ENCODE measurements at regions of chr15 and their contacts with region 1.

Region 1: GRCh38 chr15:38683382-38684242 is 119.0 kb upstream of the RASGRP1 start:
- DNase-seq: no peak
- ATAC-seq: peak; percentile 94
- H3K4me3 ChIP-seq: no peak overlapping the region
- H3K27ac ChIP-seq: no peak overlapping the region
- H3K4me1 ChIP-seq: peaks cover 5% of the 10 kb centered on the region
- H3K27me3 ChIP-seq: no peaks in the 10 kb centered on the region
- CTCF ChIP-seq: peak; percentile 73 to 91 (median 88)
- EP300 ChIP-seq: no peak
- POLR2A ChIP-seq: no peak
- RAD21 ChIP-seq: peak; percentile 99

Region 2: GRCh38 chr15:38474155-38474757 is 209.4 kb before region 1 on chr15:
- CTCF ChIA-PET with region 1: interaction called, 219 read pairs
- POLR2A ChIA-PET with region 1: no interaction called
- RAD21 ChIA-PET with region 1: interaction called, 148 read pairs
- SMC1A ChIA-PET with region 1: interaction called, 115 read pairs
- in situ Hi-C with region 1: no loop called
- intact Hi-C with region 1: loop called (anchors 1 kb)
- DNase-seq: peak; percentile 33
- ATAC-seq: peak; percentile 99
- H3K4me3 ChIP-seq: no peak overlapping the region
- H3K27ac ChIP-seq: no peak overlapping the region
- H3K4me1 ChIP-seq: no peaks in the 10 kb centered on the region
- H3K27me3 ChIP-seq: no peaks in the 10 kb centered on the region
- CTCF ChIP-seq: peak; percentile 67 to 92 (median 74); a peak in 5 of 6 replicates
- EP300 ChIP-seq: no peak
- POLR2A ChIP-seq: no peak
- RAD21 ChIP-seq: peak; percentile 84

Region 3: GRCh38 chr15:38521316-38521715 is 162.3 kb before region 1 on chr15:
- CTCF ChIA-PET with region 1: interaction called, 41 read pairs
- POLR2A ChIA-PET with region 1: interaction called, 8 read pairs
- RAD21 ChIA-PET with region 1: interaction called, 15 read pairs
- SMC1A ChIA-PET with region 1: interaction called, 208 read pairs
- in situ Hi-C with region 1: no loop called
- intact Hi-C with region 1: no loop called
- DNase-seq: no peak
- ATAC-seq: no peak
- H3K4me3 ChIP-seq: no peak overlapping the region
- H3K27ac ChIP-seq: no peak overlapping the region
- H3K4me1 ChIP-seq: no peaks in the 10 kb centered on the region
- H3K27me3 ChIP-seq: no peaks in the 10 kb centered on the region
- CTCF ChIP-seq: no peak
- EP300 ChIP-seq: no peak
- POLR2A ChIP-seq: no peak
- RAD21 ChIP-seq: no peak

Region 4: GRCh38 chr15:38563723-38564519 is 119.7 kb before region 1 on chr15:
- CTCF ChIA-PET with region 1: interaction called, 276 read pairs
- POLR2A ChIA-PET with region 1: interaction called, 18 read pairs
- RAD21 ChIA-PET with region 1: interaction called, 248 read pairs
- SMC1A ChIA-PET with region 1: interaction called, 293 read pairs
- in situ Hi-C with region 1: loop called (anchors 5 kb)
- intact Hi-C with region 1: loop called (anchors 1 kb)
- DNase-seq: no peak
- ATAC-seq: peak; percentile 77
- H3K4me3 ChIP-seq: peak overlapping the region; percentile 75
- H3K27ac ChIP-seq: peak overlapping the region; percentile 72
- H3K4me1 ChIP-seq: peaks cover 37% of the 10 kb centered on the region
- H3K27me3 ChIP-seq: no peaks in the 10 kb centered on the region
- CTCF ChIP-seq: peak; percentile 88 to 95 (median 94)
- EP300 ChIP-seq: no peak
- POLR2A ChIP-seq: no peak; the same call in 1 of the 2 replicates
- RAD21 ChIP-seq: peak; percentile 75

Region 5: DNA sequence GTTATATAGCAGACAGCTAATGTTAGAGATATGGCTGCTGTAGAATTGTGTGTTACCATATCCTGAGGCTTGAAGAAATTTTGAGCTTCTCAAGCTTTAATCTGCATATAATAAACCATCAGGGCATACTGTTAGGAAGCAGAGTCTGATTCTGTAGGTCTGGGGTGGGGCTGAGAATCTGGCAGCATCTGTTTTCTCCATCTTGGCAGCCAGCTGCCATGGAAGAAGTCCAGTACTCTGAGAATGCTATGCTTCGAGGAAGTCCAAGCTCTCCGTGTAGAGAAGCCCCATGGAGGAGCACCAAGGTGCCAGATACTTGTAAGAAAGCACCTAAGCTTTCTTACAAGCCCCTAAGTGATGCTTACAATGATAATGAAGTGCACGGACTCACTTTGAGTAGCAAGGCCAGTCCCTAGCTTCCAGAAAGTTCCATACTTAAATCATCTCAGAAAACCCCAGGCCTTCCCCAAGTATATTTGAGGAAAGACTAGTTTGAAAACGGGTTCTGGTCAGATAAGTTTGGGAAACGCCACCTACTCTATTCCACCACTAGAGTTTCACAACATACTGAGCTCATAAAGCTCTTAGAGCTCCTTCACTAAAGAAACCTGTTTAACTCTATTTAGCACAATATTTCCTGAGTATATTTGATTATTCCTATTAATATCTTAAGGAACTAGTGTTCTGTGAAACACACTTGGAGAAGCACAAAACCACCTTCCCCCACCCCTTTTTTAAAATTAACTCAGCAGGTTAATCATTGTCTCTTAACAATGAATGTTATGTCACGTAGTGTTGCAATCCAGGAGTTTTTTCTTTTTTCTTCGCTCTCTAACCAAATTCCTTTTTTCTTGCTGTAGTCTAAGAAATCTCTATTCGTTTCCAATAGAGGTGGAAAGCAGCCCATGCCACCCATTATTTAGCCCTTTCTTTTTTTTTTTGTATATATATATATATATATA is 59.1 kb before region 1 on chr15:
- CTCF ChIA-PET with region 1: interaction called, 63 read pairs
- POLR2A ChIA-PET with region 1: interaction called, 9 read pairs
- RAD21 ChIA-PET with region 1: interaction called, 322 read pairs
- SMC1A ChIA-PET with region 1: interaction called, 1,803 read pairs
- in situ Hi-C with region 1: no loop called
- intact Hi-C with region 1: no loop called
- DNase-seq: no peak
- ATAC-seq: peak; percentile 33
- H3K4me3 ChIP-seq: no peak overlapping the region
- H3K27ac ChIP-seq: no peak overlapping the region
- H3K4me1 ChIP-seq: no peaks in the 10 kb centered on the region
- H3K27me3 ChIP-seq: no peaks in the 10 kb centered on the region
- CTCF ChIP-seq: 0 out of 6 replicates have a peak, but pooled peaks of 1 of the 3 experiments have one; percentile 3
- EP300 ChIP-seq: no peak
- POLR2A ChIP-seq: no peak
- RAD21 ChIP-seq: no peak

Region 6: DNA sequence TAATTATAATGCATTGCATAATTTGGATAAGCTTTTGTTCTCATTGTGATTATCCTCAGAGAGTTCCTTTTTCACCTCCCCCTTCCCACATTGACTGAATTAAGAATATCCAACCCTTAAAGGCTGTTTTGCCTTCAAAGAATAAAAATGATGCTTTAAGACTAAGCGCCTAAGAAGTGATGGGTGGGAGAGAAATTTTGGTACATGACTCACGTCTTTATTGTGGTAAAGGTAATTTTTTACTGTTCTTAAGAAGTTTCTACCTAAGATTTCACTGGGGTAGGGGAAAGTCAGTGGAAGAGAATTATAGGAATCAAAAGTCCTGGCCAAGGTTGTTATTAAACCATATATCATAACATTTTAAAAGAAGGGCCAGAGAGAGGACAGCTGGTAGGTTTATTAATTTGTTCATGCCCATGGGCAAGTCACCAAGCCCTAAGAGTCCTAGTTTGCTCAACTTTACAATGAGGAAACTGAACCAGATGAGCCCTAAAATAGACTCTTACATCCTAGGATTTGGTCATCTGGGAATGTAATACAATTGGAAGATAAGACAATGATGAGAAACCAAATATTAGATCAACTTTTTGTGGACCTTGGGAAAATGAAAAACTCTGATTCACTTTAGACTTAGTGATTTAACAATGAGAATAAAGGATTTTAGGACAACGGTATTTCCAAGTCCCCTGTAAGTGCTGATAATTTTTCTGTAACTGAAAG is 17.9 kb before region 1 on chr15:
- CTCF ChIA-PET with region 1: interaction called, 173 read pairs
- POLR2A ChIA-PET with region 1: interaction called, 45 read pairs
- RAD21 ChIA-PET with region 1: interaction called, 517 read pairs
- SMC1A ChIA-PET with region 1: interaction called, 513 read pairs
- in situ Hi-C with region 1: no loop called
- intact Hi-C with region 1: no loop called
- DNase-seq: no peak
- ATAC-seq: no peak
- H3K4me3 ChIP-seq: no peak overlapping the region
- H3K27ac ChIP-seq: no peak overlapping the region
- H3K4me1 ChIP-seq: peaks cover 17% of the 10 kb centered on the region
- H3K27me3 ChIP-seq: no peaks in the 10 kb centered on the region
- CTCF ChIP-seq: no peak
- EP300 ChIP-seq: no peak
- POLR2A ChIP-seq: no peak
- RAD21 ChIP-seq: no peak